Sciatic nerve (tissue), 2 donors: ENCODE measurements at regions of chr5 and their contacts with region 1.

Region 1: DNA sequence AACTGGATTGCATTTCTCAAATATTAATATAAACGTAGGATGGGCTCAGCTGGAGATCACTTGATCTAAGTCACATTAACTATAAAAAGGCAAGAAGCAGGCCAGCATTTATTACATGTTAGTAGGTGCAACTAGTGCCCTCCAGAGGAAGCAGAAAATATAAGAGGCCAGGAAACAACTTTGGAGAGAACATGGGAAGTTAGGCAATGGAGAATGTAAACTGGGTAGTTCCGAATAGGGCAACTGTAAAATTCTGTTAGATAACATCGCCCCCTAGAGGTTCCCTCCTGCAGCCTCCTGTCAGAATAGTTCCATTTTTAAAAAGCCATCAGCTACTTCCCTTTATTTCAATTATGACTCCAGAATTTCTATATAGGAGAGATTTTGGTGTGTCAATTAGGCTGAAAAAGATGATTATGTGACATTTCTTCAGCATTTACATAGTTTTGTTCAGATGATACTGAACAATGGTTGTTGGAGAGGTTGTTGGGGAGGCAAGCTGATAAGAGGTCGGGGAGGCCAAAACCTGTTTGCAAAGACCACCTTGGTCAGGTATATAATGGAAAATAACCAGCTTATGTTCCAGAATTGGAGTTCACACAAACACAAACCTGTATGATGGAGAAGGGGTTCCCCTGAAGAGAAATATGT is 22.4 kb downstream of the CCL28 start:
- DNase-seq: no peak
- ATAC-seq: peak; percentile 95

Region 2: GRCh38 chr5:43110606-43111442 is 279.0 kb before region 1 on chr5:
- intact Hi-C with region 1: loop called (anchors 10 kb)
- DNase-seq: no peak
- ATAC-seq: no peak